ENCODE measurements at regions of chr1 and their contacts with region 1.

Region 1: GRCh38 chr1:157315544-157315943 is 177.3 kb upstream of the ETV3 start:
- DNase-seq: no peak
- ATAC-seq: no peak
- H3K4me3 ChIP-seq: no peak overlapping the region
- H3K27ac ChIP-seq: no peak overlapping the region
- H3K4me1 ChIP-seq: peaks cover 9 to 21% of the 10 kb centered on the region in 2 experiments; a peak in 4 of 5 replicates
- H3K27me3 ChIP-seq: no peaks in the 10 kb centered on the region
- CTCF ChIP-seq: no peak
- EP300 ChIP-seq: no peak
- POLR2A ChIP-seq: no peak
- RAD21 ChIP-seq: no peak

Region 2: GRCh38 chr1:157008502-157008901 is 307.0 kb before region 1 on chr1:
- CTCF ChIA-PET with region 1: no interaction called
- POLR2A ChIA-PET with region 1: no interaction called
- in situ Hi-C with region 1: no loop called
- intact Hi-C with region 1: no loop called
- DNase-seq: no peak
- ATAC-seq: no peak
- H3K4me3 ChIP-seq: no peak overlapping the region
- H3K27ac ChIP-seq: no peak overlapping the region
- H3K4me1 ChIP-seq: peaks cover 0 to 8% of the 10 kb centered on the region in 2 experiments; a peak in 2 of 5 replicates
- H3K27me3 ChIP-seq: no peaks in the 10 kb centered on the region
- CTCF ChIP-seq: no peak
- EP300 ChIP-seq: no peak
- POLR2A ChIP-seq: no peak
- RAD21 ChIP-seq: no peak

Region 3: DNA sequence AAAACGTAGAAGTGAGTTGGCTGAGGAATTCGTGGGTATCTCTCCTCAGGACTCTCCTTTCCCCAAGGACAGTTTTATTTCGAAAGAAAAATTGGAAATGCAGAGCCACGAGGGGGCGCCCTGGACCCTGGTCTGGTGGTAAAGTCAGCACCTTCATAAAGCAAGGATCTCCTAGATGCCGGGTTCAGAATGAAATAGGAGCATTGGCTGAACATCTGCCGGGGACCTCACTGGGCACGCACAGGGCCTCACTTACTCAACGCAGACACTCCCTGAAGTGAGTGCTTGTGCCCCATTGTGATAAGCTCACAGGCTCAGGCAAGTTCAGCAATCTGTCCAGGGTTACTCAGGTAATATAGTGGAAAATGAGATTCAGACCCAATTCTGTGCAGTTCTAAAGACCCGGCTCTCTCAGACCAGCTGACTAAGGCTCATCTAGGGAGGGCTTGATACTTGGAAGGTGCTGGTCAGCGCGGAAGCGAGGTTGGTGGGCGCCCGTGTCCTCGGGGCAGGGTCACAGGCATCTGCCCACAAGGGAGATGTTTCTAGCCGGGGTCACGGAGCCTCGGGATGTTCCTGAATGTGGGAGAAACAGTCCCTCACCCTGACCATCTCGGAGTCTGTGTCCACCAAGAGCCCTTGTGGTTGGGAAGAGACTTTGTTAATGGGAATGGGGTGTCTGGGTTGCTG is 121.7 kb before region 1 on chr1:
- CTCF ChIA-PET with region 1: no interaction called
- POLR2A ChIA-PET with region 1: no interaction called
- in situ Hi-C with region 1: no loop called
- intact Hi-C with region 1: loop called (anchors 1 kb)
- DNase-seq: peak; percentile 72 to 83 (median 75)
- ATAC-seq: peak; percentile 66
- H3K4me3 ChIP-seq: no peak overlapping the region
- H3K27ac ChIP-seq: no peak overlapping the region
- H3K4me1 ChIP-seq: peaks cover 2 to 11% of the 10 kb centered on the region in 2 experiments; a peak in 1 of 5 replicates
- H3K27me3 ChIP-seq: peaks cover 11 to 31% of the 10 kb centered on the region in 2 experiments; a peak in 4 of 5 replicates
- CTCF ChIP-seq: peak; percentile 78 to 90 (median 83)
- EP300 ChIP-seq: no peak
- POLR2A ChIP-seq: no peak
- RAD21 ChIP-seq: peak; percentile 74 to 85

Region 4: GRCh38 chr1:157369808-157370521 is 54.4 kb after region 1 on chr1:
- CTCF ChIA-PET with region 1: interaction called, 4 read pairs
- POLR2A ChIA-PET with region 1: interaction called, 3 read pairs
- in situ Hi-C with region 1: loop called (anchors 5 kb)
- intact Hi-C with region 1: loop called (anchors 5 kb)
- DNase-seq: peak; percentile 61 to 88 (median 66)
- ATAC-seq: peak; percentile 80
- H3K4me3 ChIP-seq: no peak overlapping the region
- H3K27ac ChIP-seq: peak overlapping the region; percentile 13; the same call in 1 of the 3 replicates
- H3K4me1 ChIP-seq: peaks cover 13 to 54% of the 10 kb centered on the region in 2 experiments; a peak in 4 of 5 replicates
- H3K27me3 ChIP-seq: no peaks in the 10 kb centered on the region
- CTCF ChIP-seq: peak; percentile 80 to 86 (median 85)
- EP300 ChIP-seq: no peak
- POLR2A ChIP-seq: no peak
- RAD21 ChIP-seq: peak; percentile 84 to 88

Region 5: DNA sequence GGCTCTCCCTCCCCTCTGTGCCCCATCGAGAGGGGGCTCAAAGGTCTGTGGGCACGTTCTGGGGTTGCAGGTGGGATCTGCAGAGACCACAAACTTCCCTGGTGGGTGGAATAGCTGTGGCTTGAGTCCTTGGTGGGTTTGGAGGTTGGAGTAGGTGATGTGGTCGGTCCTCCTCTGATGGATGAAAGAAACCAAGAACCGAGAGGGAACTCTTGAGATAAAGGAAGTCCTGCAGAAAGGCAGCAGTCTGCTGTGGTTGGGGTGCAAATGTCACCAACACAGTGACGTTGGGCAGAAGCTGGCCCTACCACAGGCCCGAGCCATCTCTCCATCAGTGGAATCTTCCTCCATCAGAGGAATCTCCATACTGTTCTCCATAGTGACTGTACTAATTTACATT is 65.0 kb after region 1 on chr1:
- CTCF ChIA-PET with region 1: no interaction called
- POLR2A ChIA-PET with region 1: no interaction called
- in situ Hi-C with region 1: no loop called
- intact Hi-C with region 1: loop called (anchors 1 kb)
- DNase-seq: no peak
- ATAC-seq: no peak
- H3K4me3 ChIP-seq: no peak overlapping the region
- H3K27ac ChIP-seq: no peak overlapping the region
- H3K4me1 ChIP-seq: peaks cover 3 to 14% of the 10 kb centered on the region in 2 experiments; a peak in 4 of 5 replicates
- H3K27me3 ChIP-seq: peaks cover 0 to 12% of the 10 kb centered on the region in 2 experiments; a peak in 2 of 5 replicates
- CTCF ChIP-seq: no peak
- EP300 ChIP-seq: no peak
- POLR2A ChIP-seq: no peak
- RAD21 ChIP-seq: no peak

Measured in K562 (cell line).